GM12878 (cell line): ENCODE measurements at regions of chr13 and their contacts with region 1.

Region 1: DNA sequence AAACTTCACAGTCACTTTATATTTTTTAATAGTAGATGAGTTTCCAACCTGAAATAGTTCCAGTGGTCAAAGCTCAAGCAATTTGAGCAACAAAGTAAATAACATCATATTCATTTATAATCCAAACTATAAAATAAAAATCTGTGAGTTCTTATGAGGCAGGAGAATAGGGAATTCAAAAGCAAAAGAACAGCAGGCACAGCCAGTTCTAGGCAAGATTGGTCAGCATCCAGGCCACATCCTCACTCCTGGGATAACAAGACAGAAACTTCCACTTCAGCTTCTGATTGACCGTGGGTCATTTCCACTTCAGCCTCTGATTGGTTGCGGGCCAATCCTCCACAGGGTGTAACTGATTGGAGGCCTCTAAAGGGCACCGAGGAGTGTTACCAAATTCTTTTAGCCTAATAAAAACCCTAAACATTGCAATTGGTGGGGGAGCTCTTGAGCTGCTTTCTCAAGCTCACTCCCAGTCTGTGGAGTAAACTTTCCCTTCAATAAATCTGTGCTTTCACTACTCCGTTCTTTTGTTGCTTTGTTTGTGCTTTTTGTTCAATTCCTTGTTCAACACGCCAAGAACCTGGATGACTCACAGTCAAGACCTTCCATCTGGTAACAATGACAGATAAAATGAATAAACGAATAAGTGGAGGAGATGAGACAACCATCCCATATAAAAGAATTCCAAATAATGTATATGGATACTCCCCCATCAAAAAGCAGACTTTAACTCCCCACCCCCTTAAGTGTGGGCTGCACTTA is 42.6 kb upstream of the AMER2 start:
- DNase-seq: no peak
- ATAC-seq: no peak
- H3K4me3 ChIP-seq: no peak overlapping the region
- H3K27ac ChIP-seq: no peak overlapping the region
- H3K4me1 ChIP-seq: no peaks in the 10 kb centered on the region
- H3K27me3 ChIP-seq: no peaks in the 10 kb centered on the region
- CTCF ChIP-seq: no peak
- EP300 ChIP-seq: no peak
- POLR2A ChIP-seq: no peak
- RAD21 ChIP-seq: no peak

Region 2: GRCh38 chr13:25186187-25186586 is 28.5 kb before region 1 on chr13:
- CTCF ChIA-PET with region 1: no interaction called
- POLR2A ChIA-PET with region 1: no interaction called
- RAD21 ChIA-PET with region 1: no interaction called
- SMC1A ChIA-PET with region 1: no interaction called
- in situ Hi-C with region 1: no loop called
- intact Hi-C with region 1: loop called (anchors 1 kb)
- DNase-seq: no peak
- ATAC-seq: peak; percentile 64
- H3K4me3 ChIP-seq: peak overlapping the region; percentile 43; the same call in 1 of the 2 replicates
- H3K27ac ChIP-seq: no peak overlapping the region
- H3K4me1 ChIP-seq: peaks cover 24% of the 10 kb centered on the region
- H3K27me3 ChIP-seq: no peaks in the 10 kb centered on the region
- CTCF ChIP-seq: no peak
- EP300 ChIP-seq: no peak
- POLR2A ChIP-seq: no peak
- RAD21 ChIP-seq: peak; percentile 6; the same call in 1 of the 2 replicates

Region 3: DNA sequence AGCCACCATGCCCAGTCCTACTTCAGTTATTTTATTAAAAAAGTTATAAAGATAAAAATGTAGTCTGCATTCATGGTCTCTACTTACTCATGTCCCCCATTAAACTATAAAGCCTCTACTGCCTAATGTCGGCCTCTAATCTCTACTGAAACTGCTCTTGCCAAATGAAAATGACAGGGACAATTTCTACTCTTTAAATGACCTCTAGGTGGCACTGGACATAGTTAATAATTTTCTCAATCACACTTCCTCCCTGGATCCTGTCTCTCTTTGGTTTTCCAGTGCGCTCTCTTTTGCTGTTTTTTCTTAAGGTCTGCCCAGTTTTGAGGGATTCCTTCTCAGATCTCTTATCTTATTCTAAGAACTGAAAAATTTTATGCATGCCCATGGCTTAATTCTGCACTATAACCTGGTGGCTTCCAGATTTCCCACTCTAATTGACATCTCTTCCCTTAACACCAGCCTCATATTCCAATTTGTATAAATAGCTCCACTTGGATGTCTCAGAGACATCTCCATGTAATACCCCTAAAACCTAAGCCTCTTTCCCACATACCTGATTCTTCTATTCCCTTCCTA is 18.4 kb after region 1 on chr13:
- CTCF ChIA-PET with region 1: no interaction called
- POLR2A ChIA-PET with region 1: no interaction called
- RAD21 ChIA-PET with region 1: no interaction called
- SMC1A ChIA-PET with region 1: no interaction called
- in situ Hi-C with region 1: no loop called
- intact Hi-C with region 1: no loop called
- DNase-seq: no peak
- ATAC-seq: peak; percentile 81
- H3K4me3 ChIP-seq: no peak overlapping the region
- H3K27ac ChIP-seq: no peak overlapping the region
- H3K4me1 ChIP-seq: peaks cover 8% of the 10 kb centered on the region; the same call in 1 of the 2 replicates
- H3K27me3 ChIP-seq: no peaks in the 10 kb centered on the region; a peak in 1 of 4 replicates
- CTCF ChIP-seq: peak; percentile 45 to 56 (median 50); a peak in 4 of 6 replicates
- EP300 ChIP-seq: no peak
- POLR2A ChIP-seq: no peak
- RAD21 ChIP-seq: peak; percentile 54

Region 4: GRCh38 chr13:25267715-25268114 is 53.0 kb after region 1 on chr13:
- CTCF ChIA-PET with region 1: no interaction called
- POLR2A ChIA-PET with region 1: no interaction called
- RAD21 ChIA-PET with region 1: no interaction called
- SMC1A ChIA-PET with region 1: no interaction called
- in situ Hi-C with region 1: no loop called
- intact Hi-C with region 1: no loop called
- DNase-seq: no peak
- ATAC-seq: peak; percentile 71
- H3K4me3 ChIP-seq: no peak overlapping the region
- H3K27ac ChIP-seq: no peak overlapping the region
- H3K4me1 ChIP-seq: no peaks in the 10 kb centered on the region
- H3K27me3 ChIP-seq: no peaks in the 10 kb centered on the region
- CTCF ChIP-seq: peak; percentile 12 to 33 (median 19); a peak in 3 of 6 replicates
- EP300 ChIP-seq: no peak
- POLR2A ChIP-seq: no peak
- RAD21 ChIP-seq: peak; percentile 55